Adrenal gland (tissue), 19 donors: ENCODE measurements at regions of chr14 and their contacts with region 1.

Region 1: GRCh38 chr14:47917345-47917954 is 242.0 kb upstream of the MDGA2 start:
- DNase-seq: peak in 5 of 7 donors; percentile 14 to 52 (median 24)
- H3K4me3 ChIP-seq: no peak overlapping the region
- H3K27ac ChIP-seq: no peak overlapping the region
- H3K4me1 ChIP-seq: no peaks in the 10 kb centered on the region
- H3K27me3 ChIP-seq: no peaks in the 10 kb centered on the region
- CTCF ChIP-seq: peak; percentile 29 to 65 (median 58)
- POLR2A ChIP-seq: no peak

Region 2: GRCh38 chr14:48398675-48399282 is 481.3 kb after region 1 on chr14:
- intact Hi-C with region 1: loop called in 1 of 2 experiments (anchors 5 kb)
- DNase-seq: peak in 3 of 7 donors; percentile 15 to 48 (median 36)
- H3K4me3 ChIP-seq: no peak overlapping the region
- H3K27ac ChIP-seq: no peak overlapping the region
- H3K4me1 ChIP-seq: no peaks in the 10 kb centered on the region
- H3K27me3 ChIP-seq: no peaks in the 10 kb centered on the region
- CTCF ChIP-seq: peak; percentile 65 to 76 (median 70)
- POLR2A ChIP-seq: no peak